Brain microvascular endothelial cell (primary cell): ENCODE measurements at regions of chr3 and their contacts with region 1.

Region 1: DNA sequence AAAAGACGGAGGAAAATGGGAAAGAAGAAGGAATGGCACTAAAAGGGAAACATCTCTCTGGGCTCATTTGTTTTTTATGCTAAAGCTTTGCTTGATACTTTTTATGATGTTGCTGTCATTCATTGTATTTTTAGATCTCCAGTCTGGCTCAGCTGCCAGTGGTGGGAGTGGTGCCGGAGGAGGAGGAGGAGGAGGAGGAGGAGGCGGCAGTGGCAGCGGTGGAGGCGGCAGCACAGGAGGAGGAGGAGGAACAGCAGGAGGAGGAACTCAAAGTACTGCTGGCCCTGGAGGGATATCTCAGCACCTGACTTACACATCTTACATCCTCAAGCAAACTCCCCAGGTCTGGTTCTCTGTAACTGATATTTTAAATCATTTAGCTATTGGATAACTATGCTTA is 49.6 kb downstream of the MAP6D1 start:
- DNase-seq: no peak
- H3K4me3 ChIP-seq: no peak overlapping the region
- H3K27ac ChIP-seq: peak overlapping the region; percentile 46
- H3K27me3 ChIP-seq: no peaks in the 10 kb centered on the region
- CTCF ChIP-seq: no peak

Region 2: GRCh38 chr3:183490670-183491069 is 285.1 kb before region 1 on chr3:
- in situ Hi-C with region 1: loop called (anchors 25 kb)
- DNase-seq: no peak
- H3K4me3 ChIP-seq: no peak overlapping the region
- H3K27ac ChIP-seq: no peak overlapping the region
- H3K27me3 ChIP-seq: no peaks in the 10 kb centered on the region
- CTCF ChIP-seq: no peak